BJ (cell line): ENCODE measurements at regions of chr7 and their contacts with region 1.

Region 1: GRCh38 chr7:101542527-101543241 is 86.4 kb downstream of the MYL10 start:
- DNase-seq: no peak
- H3K4me3 ChIP-seq: no peak overlapping the region
- H3K27me3 ChIP-seq: peaks cover 1% of the 10 kb centered on the region
- CTCF ChIP-seq: peak; percentile 87

Region 2: DNA sequence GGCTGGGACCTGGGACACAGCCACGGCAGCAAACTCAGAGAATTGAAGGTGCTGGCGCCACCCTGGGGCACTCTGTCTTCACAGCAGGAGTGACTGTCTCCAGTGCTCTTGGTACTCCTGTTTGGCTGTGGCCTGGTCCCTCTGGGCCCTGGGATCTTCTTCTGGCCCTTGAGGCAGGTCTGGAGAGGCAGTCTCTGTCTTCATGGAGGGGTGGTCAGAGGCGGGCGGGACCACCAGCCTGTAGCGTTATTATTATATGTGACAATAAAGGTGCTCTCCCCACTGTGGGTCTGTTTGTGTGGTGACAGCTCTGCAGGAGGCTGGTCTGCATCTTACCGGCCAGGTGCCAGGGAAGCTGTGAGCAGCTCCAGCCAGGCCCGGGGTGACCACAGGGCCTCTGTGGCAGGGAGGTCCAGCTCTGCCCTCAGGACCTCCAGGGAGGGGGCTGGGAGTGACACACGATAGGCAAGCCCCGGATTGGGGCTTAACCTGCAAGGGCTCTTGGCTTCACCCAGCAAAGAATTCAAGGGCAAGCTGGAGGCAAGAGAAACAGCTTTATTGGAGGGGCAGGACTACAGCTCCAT is 16.1 kb after region 1 on chr7:
- CTCF ChIA-PET with region 1: interaction called, 18 read pairs
- POLR2A ChIA-PET with region 1: no interaction called
- DNase-seq: no peak
- H3K4me3 ChIP-seq: no peak overlapping the region
- H3K27me3 ChIP-seq: peaks cover 10% of the 10 kb centered on the region
- CTCF ChIP-seq: 0 out of 2 replicates have a peak, but pooled peaks have one; percentile 16

Region 3: GRCh38 chr7:101681170-101682007 is 138.7 kb after region 1 on chr7:
- CTCF ChIA-PET with region 1: interaction called, 12 read pairs
- POLR2A ChIA-PET with region 1: no interaction called
- DNase-seq: peak; percentile 68
- H3K4me3 ChIP-seq: no peak overlapping the region
- H3K27me3 ChIP-seq: no peaks in the 10 kb centered on the region
- CTCF ChIP-seq: no peak

Region 4: GRCh38 chr7:101815835-101816493 is 273.3 kb after region 1 on chr7:
- CTCF ChIA-PET with region 1: interaction called, 12 read pairs
- POLR2A ChIA-PET with region 1: no interaction called
- DNase-seq: no peak
- H3K4me3 ChIP-seq: peak overlapping the region; percentile 77
- H3K27me3 ChIP-seq: no peaks in the 10 kb centered on the region
- CTCF ChIP-seq: peak; percentile 8; the same call in 1 of the 2 replicates

Region 5: DNA sequence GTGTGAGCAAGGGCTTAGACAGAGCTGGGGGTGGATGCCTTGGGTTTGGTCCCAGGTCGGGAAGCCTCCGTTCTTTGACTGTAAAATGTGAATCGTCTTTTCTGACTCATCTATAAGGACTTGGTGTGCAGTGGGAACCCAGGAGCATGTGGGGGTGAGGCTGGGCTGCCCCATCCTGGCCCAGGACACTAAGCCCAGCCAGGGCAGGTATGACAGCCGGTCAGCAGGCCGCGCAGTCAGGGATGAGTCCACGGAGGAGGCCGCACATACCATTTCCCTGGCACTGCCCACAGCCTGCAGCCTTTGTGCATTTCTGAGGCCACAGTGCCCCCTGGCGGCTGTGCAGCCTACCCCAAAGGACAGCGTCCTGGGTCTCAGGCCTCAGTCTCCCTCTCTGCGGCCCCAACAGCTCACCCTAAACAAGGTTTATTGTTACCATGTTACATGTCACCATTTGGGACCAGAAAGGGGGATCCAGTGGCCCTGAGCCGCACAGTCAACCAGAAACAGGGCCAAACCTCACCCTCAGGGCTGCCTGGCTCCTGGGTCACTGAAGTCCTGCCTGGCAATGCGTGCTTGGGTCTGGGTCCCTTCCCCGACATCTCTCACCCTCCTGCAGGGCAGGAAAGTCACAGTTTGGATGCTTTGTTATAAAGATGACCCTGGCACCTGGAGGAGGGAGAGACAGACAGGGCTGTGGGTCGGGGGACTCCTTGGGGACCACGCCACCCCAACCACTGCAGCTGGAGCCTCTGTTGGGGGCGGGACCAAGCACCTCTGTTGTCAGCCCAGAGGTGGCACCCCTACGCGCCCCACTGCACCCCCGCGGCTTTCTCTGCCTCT is 729.6 kb after region 1 on chr7:
- CTCF ChIA-PET with region 1: interaction called, 72 read pairs
- POLR2A ChIA-PET with region 1: no interaction called
- DNase-seq: no peak
- H3K4me3 ChIP-seq: no peak overlapping the region
- H3K27me3 ChIP-seq: no peaks in the 10 kb centered on the region
- CTCF ChIP-seq: peak; percentile 92